ENCODE measurements at regions of chr1 and their contacts with region 1.

Region 1: GRCh38 chr1:36223993-36224536 is at the start of gene THRAP3:
- DNase-seq: peak; percentile 98
- ATAC-seq: peak; percentile 89
- H3K4me3 Mint-ChIP-seq: peak within 1 kb of the TSS; percentile 99
- H3K27ac Mint-ChIP-seq: peak within 1 kb of the TSS; percentile 100
- H3K4me1 Mint-ChIP-seq: peaks cover 36% of the 10 kb centered on the region
- H3K27me3 Mint-ChIP-seq: no peaks in the 10 kb centered on the region
- CTCF ChIP-seq: no peak
- total RNA-seq, gene THRAP3: 142 and 145 TPM in 2 replicates

Region 2: DNA sequence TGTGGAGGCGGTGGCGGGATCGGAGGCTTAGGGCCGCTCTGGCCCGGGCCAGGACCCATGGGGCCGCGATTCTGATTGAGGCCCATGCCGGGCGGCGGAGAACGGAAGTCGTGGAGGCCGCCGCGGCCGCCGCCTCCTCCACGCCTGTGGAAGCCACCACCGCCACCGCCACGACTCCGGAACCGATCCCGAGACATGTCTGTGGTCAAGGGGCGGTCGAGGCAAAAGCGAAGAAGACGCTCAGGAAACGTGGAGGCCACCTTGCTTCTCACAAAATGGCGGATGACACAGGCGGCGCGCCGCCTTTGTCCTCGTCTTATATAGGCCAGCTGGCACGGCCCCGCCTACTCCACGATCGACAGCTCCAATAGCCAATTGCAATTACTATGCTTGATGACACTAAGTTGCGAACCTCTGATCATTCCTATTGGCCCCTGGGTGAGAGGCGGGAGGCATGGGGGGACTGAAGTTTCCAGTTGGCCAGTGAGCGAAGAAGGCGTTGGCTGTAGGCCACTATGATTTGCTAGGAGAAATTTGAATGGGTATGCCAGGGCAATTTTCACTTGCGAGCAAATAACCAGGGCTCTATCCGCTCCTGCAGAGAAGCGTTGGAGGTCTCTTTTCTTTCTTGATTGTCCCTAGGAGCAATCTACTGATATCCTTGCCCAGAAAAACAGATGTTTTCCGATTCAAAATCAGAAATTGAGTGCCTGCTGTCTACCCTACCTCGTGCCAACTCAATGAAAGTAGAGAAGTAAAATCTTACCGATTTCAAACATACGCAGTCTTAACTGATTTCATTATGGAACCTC is 1031.0 kb before region 1 on chr1 and contains the start of gene SFPQ:
- CTCF ChIA-PET with region 1: no interaction called
- POLR2A ChIA-PET with region 1: no interaction called
- intact Hi-C with region 1: loop called (anchors 5 kb)
- DNase-seq: peak; percentile 95
- ATAC-seq: peak; percentile 91
- H3K4me3 Mint-ChIP-seq: peak within 1 kb of the TSS; percentile 95
- H3K27ac Mint-ChIP-seq: peak within 1 kb of the TSS; percentile 98
- H3K4me1 Mint-ChIP-seq: peaks cover 39% of the 10 kb centered on the region
- H3K27me3 Mint-ChIP-seq: no peaks in the 10 kb centered on the region
- CTCF ChIP-seq: no peak
- total RNA-seq, gene SFPQ: 380 and 429 TPM in 2 replicates

Region 3: GRCh38 chr1:35930593-35931445 is 293.2 kb before region 1 on chr1 and contains the start of gene AGO3:
- CTCF ChIA-PET with region 1: no interaction called
- POLR2A ChIA-PET with region 1: interaction called, 5 read pairs
- intact Hi-C with region 1: loop called (anchors 2 kb)
- DNase-seq: peak; percentile 86
- ATAC-seq: peak; percentile 91
- H3K4me3 Mint-ChIP-seq: peak within 1 kb of the TSS; percentile 91
- H3K27ac Mint-ChIP-seq: peak within 1 kb of the TSS; percentile 91
- H3K4me1 Mint-ChIP-seq: peaks cover 28% of the 10 kb centered on the region
- H3K27me3 Mint-ChIP-seq: no peaks in the 10 kb centered on the region
- CTCF ChIP-seq: no peak
- total RNA-seq, gene AGO3: 30.7 and 37.2 TPM in 2 replicates

Region 4: GRCh38 chr1:36160949-36161485 is 63.0 kb before region 1 on chr1:
- CTCF ChIA-PET with region 1: interaction called, 3 read pairs
- POLR2A ChIA-PET with region 1: interaction called, 37 read pairs
- intact Hi-C with region 1: loop called (anchors 1 kb)
- DNase-seq: no peak
- ATAC-seq: no peak
- H3K4me3 Mint-ChIP-seq: peak overlapping the region; percentile 65
- H3K27ac Mint-ChIP-seq: peak overlapping the region; percentile 92
- H3K4me1 Mint-ChIP-seq: peaks cover 69% of the 10 kb centered on the region
- H3K27me3 Mint-ChIP-seq: no peaks in the 10 kb centered on the region
- CTCF ChIP-seq: no peak

Region 5: GRCh38 chr1:36257375-36257767 is 33.3 kb after region 1 on chr1:
- CTCF ChIA-PET with region 1: no interaction called
- POLR2A ChIA-PET with region 1: interaction called, 9 read pairs
- intact Hi-C with region 1: loop called (anchors 2 kb)
- DNase-seq: no peak
- ATAC-seq: peak; percentile 65
- H3K4me3 Mint-ChIP-seq: peak overlapping the region; percentile 42
- H3K27ac Mint-ChIP-seq: peak overlapping the region; percentile 86
- H3K4me1 Mint-ChIP-seq: peaks cover 67% of the 10 kb centered on the region
- H3K27me3 Mint-ChIP-seq: no peaks in the 10 kb centered on the region
- CTCF ChIP-seq: no peak

Region 6: GRCh38 chr1:36300526-36300925 is 76.5 kb after region 1 on chr1:
- CTCF ChIA-PET with region 1: interaction called, 4 read pairs
- POLR2A ChIA-PET with region 1: interaction called, 14 read pairs
- intact Hi-C with region 1: no loop called
- DNase-seq: no peak
- ATAC-seq: peak; percentile 60
- H3K4me3 Mint-ChIP-seq: peak overlapping the region; percentile 5
- H3K27ac Mint-ChIP-seq: peak overlapping the region; percentile 77
- H3K4me1 Mint-ChIP-seq: peaks cover 38% of the 10 kb centered on the region
- H3K27me3 Mint-ChIP-seq: no peaks in the 10 kb centered on the region
- CTCF ChIP-seq: no peak

Region 7: GRCh38 chr1:37479255-37480124 is 1255.4 kb after region 1 on chr1:
- CTCF ChIA-PET with region 1: no interaction called
- POLR2A ChIA-PET with region 1: no interaction called
- intact Hi-C with region 1: loop called (anchors 5 kb)
- DNase-seq: peak; percentile 64
- ATAC-seq: peak; percentile 54
- H3K4me3 Mint-ChIP-seq: peak overlapping the region; percentile 99
- H3K27ac Mint-ChIP-seq: peak overlapping the region; percentile 92
- H3K4me1 Mint-ChIP-seq: peaks cover 61% of the 10 kb centered on the region
- H3K27me3 Mint-ChIP-seq: no peaks in the 10 kb centered on the region
- CTCF ChIP-seq: no peak

Measured in activated B cell treated with CpG ODN at 0.5 μM for 24 hours (primary cell).